ENCODE measurements at regions of chr17 and their contacts with region 1.

Region 1: DNA sequence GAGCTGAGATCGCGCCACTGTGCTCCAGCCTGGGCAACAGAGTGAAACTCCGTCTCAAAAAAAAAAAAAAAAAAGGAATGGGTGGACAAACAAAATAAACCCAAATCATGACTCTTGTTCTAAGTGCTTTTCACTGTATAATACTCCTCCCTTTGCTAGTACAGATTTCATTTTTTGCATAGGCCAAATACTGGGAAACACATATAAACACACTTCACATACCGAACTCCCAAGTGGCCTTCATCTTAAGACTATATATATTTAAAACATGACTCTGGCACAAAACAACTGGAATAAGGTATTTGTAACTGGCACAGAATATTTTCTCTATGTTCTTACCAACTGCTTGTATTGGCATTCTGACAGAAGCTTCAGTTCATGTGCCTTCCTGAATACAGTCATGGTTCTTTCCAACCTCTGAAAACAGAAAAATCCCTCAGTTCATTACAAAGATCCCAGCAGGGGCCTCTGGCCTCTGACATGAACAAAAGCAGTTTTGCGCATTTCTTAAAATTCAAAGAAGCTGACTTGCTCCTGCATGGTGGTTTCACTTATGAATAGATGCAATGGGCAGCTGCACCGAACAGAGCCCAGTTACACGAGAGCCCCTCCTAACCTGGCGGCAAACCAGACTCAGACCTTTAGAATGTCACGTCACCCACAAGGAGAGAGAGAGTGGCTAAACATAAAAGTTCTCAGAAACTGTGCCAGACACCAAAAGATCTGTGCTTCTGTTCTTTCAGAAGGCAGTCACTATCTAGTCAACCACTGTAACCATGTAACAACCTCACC is 19.1 kb upstream of the COPRS start:
- DNase-seq: peak; percentile 99
- H3K4me3 ChIP-seq: no peak overlapping the region
- CTCF ChIP-seq: no peak

Region 2: DNA sequence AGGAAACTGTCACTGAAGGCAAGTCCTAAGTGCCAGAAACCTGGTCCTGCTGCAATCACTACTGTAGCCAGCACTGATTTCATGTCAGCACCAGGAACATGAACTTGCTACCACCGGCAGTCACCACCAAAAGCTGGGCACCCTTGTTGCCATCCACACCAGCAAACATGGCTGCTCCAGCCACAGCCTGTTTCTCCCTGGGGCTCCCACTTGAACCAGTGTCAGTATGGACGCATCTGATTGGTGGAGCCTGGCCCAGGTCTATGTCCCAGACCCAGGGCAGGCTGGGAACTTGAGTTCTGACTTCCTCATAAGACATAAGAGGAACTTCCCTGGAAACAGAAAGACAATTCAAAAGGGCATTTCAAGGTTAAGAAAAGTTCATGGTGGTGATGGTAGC is 75.6 kb before region 1 on chr17:
- in situ Hi-C with region 1: loop called (anchors 10 kb)
- DNase-seq: no peak
- H3K4me3 ChIP-seq: no peak overlapping the region
- CTCF ChIP-seq: no peak